ENCODE measurements at regions of chr11 and their contacts with region 1.

Region 1: GRCh38 chr11:62033191-62034044 is 66.0 kb upstream of the FTH1 start:
- DNase-seq: no peak
- ATAC-seq: no peak
- H3K4me3 Mint-ChIP-seq: no peak overlapping the region
- H3K27ac Mint-ChIP-seq: no peak overlapping the region
- H3K4me1 Mint-ChIP-seq: peaks cover 6% of the 10 kb centered on the region
- H3K27me3 Mint-ChIP-seq: no peaks in the 10 kb centered on the region

Region 2: GRCh38 chr11:62013591-62014476 is 19.6 kb before region 1 on chr11:
- CTCF ChIA-PET with region 1: no interaction called
- POLR2A ChIA-PET with region 1: interaction called, 10 read pairs
- intact Hi-C with region 1: no loop called
- DNase-seq: no peak
- ATAC-seq: no peak
- H3K4me3 Mint-ChIP-seq: no peak overlapping the region
- H3K27ac Mint-ChIP-seq: no peak overlapping the region
- H3K4me1 Mint-ChIP-seq: no peaks in the 10 kb centered on the region
- H3K27me3 Mint-ChIP-seq: peaks cover 2% of the 10 kb centered on the region